ENCODE measurements at regions of chr3 and their contacts with region 1.

Region 1: GRCh38 chr3:191235331-191236314 is 36.6 kb downstream of the OSTN start:
- DNase-seq: peak; percentile 63
- ATAC-seq: peak; percentile 59
- H3K4me3 ChIP-seq: no peak overlapping the region; the same call in 1 of the 2 replicates
- H3K27ac ChIP-seq: peak overlapping the region; percentile 93
- H3K4me1 ChIP-seq: peaks cover 25% of the 10 kb centered on the region
- H3K27me3 ChIP-seq: no peaks in the 10 kb centered on the region
- CTCF ChIP-seq: no peak
- POLR2A ChIP-seq: no peak
- RAD21 ChIP-seq: no peak

Region 2: GRCh38 chr3:190883973-190884832 is 351.4 kb before region 1 on chr3:
- CTCF ChIA-PET with region 1: no interaction called
- POLR2A ChIA-PET with region 1: no interaction called
- dilution Hi-C with region 1: no loop called
- in situ Hi-C with region 1: no loop called
- intact Hi-C with region 1: loop called (anchors 5 kb)
- DNase-seq: peak; percentile 66
- ATAC-seq: peak; percentile 94
- H3K4me3 ChIP-seq: no peak overlapping the region
- H3K27ac ChIP-seq: no peak overlapping the region
- H3K4me1 ChIP-seq: no peaks in the 10 kb centered on the region
- H3K27me3 ChIP-seq: no peaks in the 10 kb centered on the region
- CTCF ChIP-seq: peak; percentile 87
- POLR2A ChIP-seq: no peak
- RAD21 ChIP-seq: peak; percentile 70

Region 3: GRCh38 chr3:191051037-191051436 is 184.6 kb before region 1 on chr3:
- CTCF ChIA-PET with region 1: no interaction called
- POLR2A ChIA-PET with region 1: no interaction called
- dilution Hi-C with region 1: no loop called
- in situ Hi-C with region 1: no loop called
- intact Hi-C with region 1: loop called (anchors 5 kb)
- DNase-seq: peak; percentile 47
- ATAC-seq: peak; percentile 85
- H3K4me3 ChIP-seq: no peak overlapping the region
- H3K27ac ChIP-seq: no peak overlapping the region
- H3K4me1 ChIP-seq: no peaks in the 10 kb centered on the region
- H3K27me3 ChIP-seq: no peaks in the 10 kb centered on the region
- CTCF ChIP-seq: peak; percentile 70
- POLR2A ChIP-seq: no peak
- RAD21 ChIP-seq: peak; percentile 63

Region 4: DNA sequence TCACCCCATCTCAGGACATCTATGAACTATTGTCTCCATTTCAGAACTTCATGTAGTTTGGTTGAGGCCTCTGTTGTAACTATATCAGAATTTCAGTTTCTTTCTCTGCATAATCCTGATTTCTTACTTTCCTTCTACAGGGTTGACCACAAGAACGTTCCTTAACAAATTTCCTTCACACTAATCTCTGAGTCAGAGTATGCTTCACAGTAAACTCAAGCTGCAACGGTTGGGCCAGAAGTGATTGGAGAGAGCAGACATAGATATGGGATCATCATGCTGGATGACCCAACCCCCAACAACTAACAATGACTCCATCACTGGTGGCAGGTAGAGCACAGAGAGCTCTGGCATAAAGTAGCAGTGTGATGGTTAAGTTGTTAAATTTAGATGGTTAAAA is 165.4 kb before region 1 on chr3:
- CTCF ChIA-PET with region 1: no interaction called
- POLR2A ChIA-PET with region 1: interaction called, 3 read pairs
- dilution Hi-C with region 1: no loop called
- in situ Hi-C with region 1: no loop called
- intact Hi-C with region 1: loop called (anchors 5 kb)
- DNase-seq: peak; percentile 95
- ATAC-seq: peak; percentile 88
- H3K4me3 ChIP-seq: no peak overlapping the region
- H3K27ac ChIP-seq: peak overlapping the region; percentile 61; the same call in 1 of the 2 replicates
- H3K4me1 ChIP-seq: peaks cover 17% of the 10 kb centered on the region; the same call in 1 of the 2 replicates
- H3K27me3 ChIP-seq: no peaks in the 10 kb centered on the region
- CTCF ChIP-seq: no peak
- POLR2A ChIP-seq: no peak
- RAD21 ChIP-seq: no peak

Region 5: DNA sequence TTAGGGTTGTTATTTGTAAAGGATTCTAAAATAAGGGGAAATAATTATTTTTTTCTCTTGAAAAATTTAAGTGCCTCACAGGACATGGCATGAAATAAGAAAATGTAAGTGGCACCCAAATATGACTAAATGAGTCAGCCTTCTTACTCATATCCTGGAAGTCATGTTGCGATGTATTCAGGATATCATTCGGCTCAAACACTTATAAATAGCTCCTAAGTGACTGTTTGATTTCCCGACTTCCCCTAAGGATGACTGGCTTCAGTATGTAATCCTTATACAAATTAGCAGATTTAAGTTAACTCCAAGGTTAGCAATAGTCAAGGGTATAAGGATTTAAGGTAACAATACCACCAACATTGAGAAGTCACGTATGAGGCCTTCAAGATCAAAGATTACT is 93.9 kb before region 1 on chr3:
- CTCF ChIA-PET with region 1: no interaction called
- POLR2A ChIA-PET with region 1: no interaction called
- dilution Hi-C with region 1: no loop called
- in situ Hi-C with region 1: no loop called
- intact Hi-C with region 1: loop called (anchors 1 kb)
- DNase-seq: peak; percentile 94
- ATAC-seq: peak; percentile 87
- H3K4me3 ChIP-seq: no peak overlapping the region
- H3K27ac ChIP-seq: peak overlapping the region; percentile 46; the same call in 1 of the 2 replicates
- H3K4me1 ChIP-seq: peaks cover 2% of the 10 kb centered on the region; the same call in 1 of the 2 replicates
- H3K27me3 ChIP-seq: no peaks in the 10 kb centered on the region
- CTCF ChIP-seq: no peak
- POLR2A ChIP-seq: no peak
- RAD21 ChIP-seq: no peak

Region 6: DNA sequence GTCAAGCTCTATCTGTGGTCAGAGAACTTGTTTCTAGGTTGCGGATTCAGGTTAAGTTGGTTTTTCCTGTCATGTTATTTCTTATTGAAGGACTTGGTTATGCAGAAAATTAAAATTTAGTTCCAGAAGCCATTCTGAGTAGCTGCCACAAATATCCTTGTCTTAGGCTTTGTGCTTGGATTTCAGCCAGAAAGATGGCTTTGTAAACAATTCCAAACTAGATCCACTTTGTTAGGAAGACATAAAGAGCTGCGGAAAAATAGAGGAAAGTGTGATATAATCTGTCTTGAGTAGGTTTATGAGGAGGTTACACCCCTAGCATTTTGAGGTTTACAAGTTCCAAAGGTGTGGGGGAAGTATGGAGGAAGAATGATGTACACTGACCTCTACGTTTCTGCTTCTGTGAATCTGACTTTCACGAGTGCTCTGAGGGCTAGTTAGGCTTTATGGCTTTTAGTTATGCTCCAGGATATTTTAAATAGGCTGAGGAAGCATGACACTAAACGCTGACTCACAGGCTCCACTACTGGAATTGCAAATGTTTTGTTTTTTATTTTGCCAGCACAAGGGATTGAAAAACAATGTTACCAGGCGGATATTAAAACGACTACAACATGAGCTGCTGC is 141.0 kb after region 1 on chr3:
- CTCF ChIA-PET with region 1: no interaction called
- POLR2A ChIA-PET with region 1: no interaction called
- dilution Hi-C with region 1: no loop called
- in situ Hi-C with region 1: loop called (anchors 10 kb)
- intact Hi-C with region 1: loop called (anchors 5 kb)
- DNase-seq: peak; percentile 81
- ATAC-seq: peak; percentile 89
- H3K4me3 ChIP-seq: no peak overlapping the region
- H3K27ac ChIP-seq: peak overlapping the region; percentile 51; the same call in 1 of the 2 replicates
- H3K4me1 ChIP-seq: peaks cover 11% of the 10 kb centered on the region
- H3K27me3 ChIP-seq: no peaks in the 10 kb centered on the region
- CTCF ChIP-seq: no peak
- POLR2A ChIP-seq: no peak
- RAD21 ChIP-seq: no peak

Region 7: GRCh38 chr3:191631496-191631895 is 395.9 kb after region 1 on chr3:
- CTCF ChIA-PET with region 1: no interaction called
- POLR2A ChIA-PET with region 1: no interaction called
- dilution Hi-C with region 1: no loop called
- in situ Hi-C with region 1: no loop called
- intact Hi-C with region 1: no loop called
- DNase-seq: no peak
- ATAC-seq: no peak
- H3K4me3 ChIP-seq: no peak overlapping the region
- H3K27ac ChIP-seq: no peak overlapping the region
- H3K4me1 ChIP-seq: no peaks in the 10 kb centered on the region
- H3K27me3 ChIP-seq: no peaks in the 10 kb centered on the region
- CTCF ChIP-seq: no peak
- POLR2A ChIP-seq: no peak
- RAD21 ChIP-seq: no peak

Measured in IMR-90 (cell line).